PC-3 (cell line): ENCODE measurements at regions of chr4 and their contacts with region 1.

Region 1: GRCh38 chr4:72987741-72988729 is 81.5 kb downstream of the COX18 start:
- DNase-seq: peak; percentile 17
- ATAC-seq: no peak
- H3K4me3 ChIP-seq: no peak overlapping the region
- H3K27ac ChIP-seq: no peak overlapping the region
- H3K4me1 ChIP-seq: no peaks in the 10 kb centered on the region
- H3K27me3 ChIP-seq: no peaks in the 10 kb centered on the region
- CTCF ChIP-seq: peak; percentile 44

Region 2: DNA sequence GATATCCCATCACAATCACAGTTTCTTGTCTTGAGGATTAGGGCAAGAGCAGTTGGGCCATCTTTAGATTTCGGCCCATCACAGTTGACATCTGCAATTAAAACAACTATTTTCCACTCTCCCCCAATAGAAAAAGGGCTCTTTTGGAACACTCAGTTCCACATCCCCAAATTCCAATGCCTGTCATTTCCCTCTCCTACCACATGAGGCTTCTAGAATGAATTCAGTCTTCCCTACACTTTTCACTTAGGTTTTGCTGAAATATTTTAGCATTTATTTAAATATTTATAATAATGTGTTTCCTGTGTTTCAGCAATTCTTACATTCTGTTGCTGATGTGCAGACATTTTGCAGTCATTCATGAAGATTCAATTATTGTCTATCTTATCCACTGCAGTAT is 36.9 kb before region 1 on chr4:
- CTCF ChIA-PET with region 1: no interaction called
- POLR2A ChIA-PET with region 1: no interaction called
- intact Hi-C with region 1: loop called (anchors 1 kb)
- DNase-seq: peak; percentile 42
- ATAC-seq: peak; percentile 65
- H3K4me3 ChIP-seq: no peak overlapping the region
- H3K27ac ChIP-seq: peak overlapping the region; percentile 36
- H3K4me1 ChIP-seq: peaks cover 18% of the 10 kb centered on the region
- H3K27me3 ChIP-seq: no peaks in the 10 kb centered on the region
- CTCF ChIP-seq: peak; percentile 53